T-cell (primary cell): ENCODE measurements at regions of chr11 and their contacts with region 1.

Region 1: DNA sequence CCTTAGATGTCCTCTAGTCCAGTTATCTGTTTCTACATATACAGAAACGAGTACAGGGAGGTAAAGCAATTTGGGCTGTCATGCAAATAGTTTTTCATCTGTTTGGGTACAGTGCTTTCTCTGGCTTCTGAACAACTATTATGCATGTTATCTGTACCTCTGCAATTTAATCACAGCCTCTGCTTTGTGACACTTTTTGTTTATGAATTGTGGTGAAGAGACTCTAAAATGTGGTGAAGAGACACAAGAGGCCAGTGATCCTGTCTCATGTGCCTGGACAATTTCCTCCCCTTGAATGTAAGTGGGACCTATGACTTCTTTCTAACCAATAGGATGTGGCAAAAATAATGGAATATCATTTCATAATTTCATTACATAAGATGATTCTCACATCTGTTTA is 130.3 kb upstream of the ARHGAP42 start:
- DNase-seq: no peak
- ATAC-seq: no peak
- H3K4me3 ChIP-seq: no peak overlapping the region
- H3K4me3 Mint-ChIP-seq: no peak overlapping the region
- H3K27ac ChIP-seq: no peak overlapping the region
- H3K27ac Mint-ChIP-seq: no peak overlapping the region
- H3K4me1 ChIP-seq: no peaks in the 10 kb centered on the region
- H3K4me1 Mint-ChIP-seq: no peaks in the 10 kb centered on the region
- H3K27me3 ChIP-seq: peaks cover 0 to 2% of the 10 kb centered on the region in 2 experiments
- H3K27me3 Mint-ChIP-seq: no peaks in the 10 kb centered on the region

Region 2: GRCh38 chr11:102130216-102130615 is 1573.4 kb after region 1 on chr11:
- CTCF ChIA-PET with region 1: no interaction called
- POLR2A ChIA-PET with region 1: interaction called in 1 of 2 experiments, 10 read pairs
- DNase-seq: no peak
- ATAC-seq: no peak
- H3K4me3 ChIP-seq: no peak overlapping the region
- H3K4me3 Mint-ChIP-seq: no peak overlapping the region
- H3K27ac ChIP-seq: no peak overlapping the region
- H3K27ac Mint-ChIP-seq: no peak overlapping the region
- H3K4me1 ChIP-seq: no peaks in the 10 kb centered on the region
- H3K4me1 Mint-ChIP-seq: no peaks in the 10 kb centered on the region
- H3K27me3 ChIP-seq: peaks cover 0 to 9% of the 10 kb centered on the region in 2 experiments
- H3K27me3 Mint-ChIP-seq: peaks cover 18 to 29% of the 10 kb centered on the region in 2 donors